ENCODE measurements at regions of chr1 and their contacts with region 1.

Region 1: DNA sequence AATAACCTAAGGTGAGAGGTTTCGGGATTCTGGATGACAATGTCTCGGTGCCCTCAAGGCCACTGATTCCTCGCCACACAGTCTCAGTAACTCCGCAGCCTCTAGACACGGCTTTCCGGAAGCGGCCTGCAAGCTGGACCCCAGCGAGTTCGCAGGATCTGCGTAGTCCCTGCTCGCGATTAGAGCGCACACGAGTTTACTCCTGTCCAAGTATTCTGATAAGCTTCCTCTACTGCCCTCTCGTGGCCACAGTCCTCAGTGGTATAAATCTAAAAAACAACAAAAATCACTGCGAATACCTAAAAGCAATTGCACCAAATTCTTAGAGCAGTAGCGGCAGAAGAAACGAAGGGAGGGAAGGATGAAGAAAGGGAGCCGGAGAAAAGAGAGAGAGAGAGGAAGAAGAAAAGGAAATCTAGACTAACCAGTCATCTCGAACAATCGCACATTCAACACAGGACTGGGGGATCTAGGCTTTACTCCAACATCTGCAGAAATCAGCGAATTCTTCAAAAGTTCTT is 1.1 kb upstream of the PLXNA2 start:
- DNase-seq: peak; percentile 97
- H3K4me3 ChIP-seq: peak overlapping the region; percentile 89
- H3K27ac ChIP-seq: peak overlapping the region; percentile 44; the same call in 1 of the 2 replicates
- H3K4me1 ChIP-seq: peaks cover 12% of the 10 kb centered on the region; the same call in 1 of the 2 replicates
- H3K27me3 ChIP-seq: no peaks in the 10 kb centered on the region

Region 2: GRCh38 chr1:208029381-208030287 is 215.6 kb before region 1 on chr1:
- in situ Hi-C with region 1: loop called (anchors 10 kb)
- DNase-seq: peak; percentile 87
- H3K4me3 ChIP-seq: peak overlapping the region; percentile 47
- H3K27ac ChIP-seq: peak overlapping the region; percentile 79
- H3K4me1 ChIP-seq: peaks cover 31% of the 10 kb centered on the region
- H3K27me3 ChIP-seq: no peaks in the 10 kb centered on the region

Region 3: DNA sequence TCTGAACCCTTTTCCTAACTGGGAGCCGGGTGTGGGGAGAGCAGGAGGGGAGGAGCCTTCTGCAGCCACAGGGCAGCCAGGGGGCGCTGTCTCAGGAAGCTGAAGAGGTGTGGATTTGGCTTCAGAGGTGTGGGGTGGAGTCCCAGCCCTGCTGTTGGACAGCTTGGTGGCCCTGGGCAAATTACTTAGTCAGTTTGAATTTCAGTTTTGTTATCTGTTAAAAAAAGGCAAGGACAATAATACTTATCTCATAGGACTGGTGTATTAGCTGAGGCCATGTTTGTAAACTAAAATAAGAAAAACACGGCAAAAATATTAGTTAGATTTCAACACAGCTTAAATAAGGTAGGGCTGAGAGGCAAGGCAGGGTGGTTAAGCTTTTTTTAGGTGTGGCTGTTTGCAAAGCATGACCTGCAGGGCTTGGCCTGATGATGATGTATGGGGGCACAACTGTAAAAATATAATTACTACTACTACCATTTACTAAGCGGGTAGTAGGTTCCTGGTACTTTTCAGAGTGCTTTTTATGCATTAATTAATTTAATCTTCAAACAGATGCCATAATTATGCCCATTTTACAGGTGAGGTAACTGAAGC is 112.9 kb before region 1 on chr1:
- in situ Hi-C with region 1: loop called (anchors 25 kb)
- DNase-seq: peak; percentile 86
- H3K4me3 ChIP-seq: no peak overlapping the region
- H3K27ac ChIP-seq: no peak overlapping the region
- H3K4me1 ChIP-seq: peaks cover 13% of the 10 kb centered on the region
- H3K27me3 ChIP-seq: no peaks in the 10 kb centered on the region